PC-3 (cell line): ENCODE measurements at regions of chr2 and their contacts with region 1.

Region 1: DNA sequence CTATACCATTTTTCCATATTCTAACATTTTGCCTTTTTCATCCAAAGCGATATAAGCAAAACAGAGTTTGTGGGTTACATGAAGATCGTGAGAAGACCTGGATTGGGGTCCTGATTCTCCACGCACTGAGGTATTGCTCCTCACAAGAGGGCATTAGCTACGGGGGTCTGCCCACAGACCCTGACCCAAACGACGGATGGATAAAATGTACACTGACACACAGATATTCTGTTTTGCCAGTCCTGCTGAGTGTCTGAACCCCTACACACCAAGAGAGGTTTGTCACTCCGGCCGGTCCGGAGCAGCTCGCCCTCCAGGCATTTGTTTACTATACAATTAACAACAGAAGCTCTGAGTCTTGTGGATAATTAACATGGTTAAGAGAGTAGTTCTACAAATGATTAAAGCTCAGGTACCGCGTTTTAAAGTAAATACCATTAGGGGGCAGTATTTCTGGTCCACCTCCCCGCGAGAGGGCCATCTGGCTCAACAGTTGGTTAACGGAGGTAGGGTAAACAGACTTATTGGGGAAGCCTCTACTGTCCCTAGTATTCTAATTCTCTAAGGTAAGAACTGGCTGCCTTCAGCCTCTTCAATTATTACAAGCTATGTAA is 28.4 kb downstream of the SCYGR8 start:
- DNase-seq: peak; percentile 45
- ATAC-seq: no peak
- H3K4me3 ChIP-seq: no peak overlapping the region
- H3K27ac ChIP-seq: no peak overlapping the region
- H3K4me1 ChIP-seq: no peaks in the 10 kb centered on the region
- H3K27me3 ChIP-seq: no peaks in the 10 kb centered on the region
- CTCF ChIP-seq: peak; percentile 60

Region 2: DNA sequence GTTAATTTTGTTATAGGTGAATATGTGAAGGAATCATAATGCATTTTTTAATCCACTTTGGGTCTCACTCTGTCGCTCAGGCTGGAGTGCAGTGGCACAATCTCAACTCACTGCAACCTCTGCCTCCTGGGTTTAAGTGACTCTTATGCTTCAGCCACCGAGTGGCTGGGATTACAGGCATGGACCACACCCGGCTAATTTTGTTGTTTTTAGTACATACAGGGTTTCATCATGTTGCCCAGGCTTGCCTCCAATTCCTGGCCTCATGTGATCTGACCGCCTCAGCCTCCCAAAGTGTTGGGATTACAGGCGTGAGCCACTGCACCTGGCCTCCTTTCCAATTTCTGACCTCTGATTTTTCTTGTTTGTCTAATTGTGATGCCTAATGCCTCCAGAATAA is 89.8 kb before region 1 on chr2:
- CTCF ChIA-PET with region 1: no interaction called
- POLR2A ChIA-PET with region 1: no interaction called
- intact Hi-C with region 1: no loop called
- DNase-seq: no peak
- ATAC-seq: no peak
- H3K4me3 ChIP-seq: no peak overlapping the region
- H3K27ac ChIP-seq: no peak overlapping the region
- H3K4me1 ChIP-seq: no peaks in the 10 kb centered on the region
- H3K27me3 ChIP-seq: peaks cover 5% of the 10 kb centered on the region; the same call in 1 of the 2 replicates
- CTCF ChIP-seq: no peak

Region 3: GRCh38 chr2:227884511-227884947 is 110.4 kb after region 1 on chr2:
- CTCF ChIA-PET with region 1: no interaction called
- POLR2A ChIA-PET with region 1: no interaction called
- intact Hi-C with region 1: loop called (anchors 5 kb)
- DNase-seq: peak; percentile 79
- ATAC-seq: peak; percentile 82
- H3K4me3 ChIP-seq: no peak overlapping the region
- H3K27ac ChIP-seq: no peak overlapping the region
- H3K4me1 ChIP-seq: peaks cover 24% of the 10 kb centered on the region
- H3K27me3 ChIP-seq: no peaks in the 10 kb centered on the region
- CTCF ChIP-seq: peak; percentile 87